A549 (cell line): ENCODE measurements at regions of chr15 and their contacts with region 1.

Region 1: GRCh38 chr15:63093486-63094205 is 28.0 kb upstream of the LACTB start:
- DNase-seq: peak; percentile 81 to 91
- ATAC-seq: peak; percentile 70 to 76
- H3K4me3 ChIP-seq: no peak overlapping the region
- H3K27ac ChIP-seq: peak overlapping the region; percentile 91 to 93
- H3K4me1 ChIP-seq: peaks cover 78% of the 10 kb centered on the region
- CTCF ChIP-seq: peak; percentile 98
- EP300 ChIP-seq: no peak
- POLR2A ChIP-seq: no peak
- RAD21 ChIP-seq: peak; percentile 100

Region 2: DNA sequence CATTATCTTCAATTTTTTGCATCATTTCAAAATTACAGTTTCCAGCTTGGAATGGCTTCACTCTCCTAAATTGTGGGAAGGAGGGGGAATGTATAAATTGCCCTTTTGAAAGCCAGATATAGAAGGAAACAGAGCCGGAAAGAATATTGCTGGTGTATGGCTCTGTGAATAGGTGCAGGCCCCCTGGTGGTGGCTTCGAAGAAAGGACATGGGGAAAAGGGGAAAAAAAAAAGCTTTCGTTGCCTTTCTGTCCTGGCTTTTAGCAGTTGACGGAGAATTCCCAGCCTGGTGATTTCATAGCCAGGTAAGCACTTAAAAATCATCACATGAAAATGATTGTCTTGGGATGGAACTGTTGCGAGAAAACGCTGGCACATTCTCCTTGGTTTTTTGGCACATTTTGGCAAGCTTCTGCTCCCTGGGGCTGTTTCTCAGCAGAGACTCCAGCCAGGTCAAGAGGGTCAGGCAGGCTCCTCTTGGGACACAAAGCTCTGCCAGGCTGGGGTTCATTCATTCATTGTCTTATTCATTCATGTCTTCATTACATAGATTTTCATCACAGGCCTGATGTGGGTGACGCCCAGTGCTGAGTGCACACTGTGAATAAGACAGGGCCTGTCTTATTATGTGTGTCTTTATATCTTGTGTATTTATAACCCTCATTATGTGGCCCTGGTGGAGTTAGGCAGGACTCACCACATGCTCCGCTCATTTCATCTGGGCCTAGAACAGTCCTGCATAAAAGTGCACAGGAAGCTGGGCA is 351.1 kb before region 1 on chr15:
- CTCF ChIA-PET with region 1: interaction called, 12 read pairs
- POLR2A ChIA-PET with region 1: no interaction called
- DNase-seq: peak; percentile 70 to 84
- ATAC-seq: peak; percentile 75 to 87
- H3K4me3 ChIP-seq: peak overlapping the region; percentile 40
- H3K27ac ChIP-seq: peak overlapping the region; percentile 75 to 78
- H3K4me1 ChIP-seq: peaks cover 44% of the 10 kb centered on the region
- CTCF ChIP-seq: peak; percentile 96
- EP300 ChIP-seq: peak in 1 of 2 experiments; percentile 23; a peak in 1 of 5 replicates
- POLR2A ChIP-seq: no peak
- RAD21 ChIP-seq: peak; percentile 66 to 70

Region 3: GRCh38 chr15:62964251-62964650 is 129.4 kb before region 1 on chr15:
- CTCF ChIA-PET with region 1: no interaction called
- POLR2A ChIA-PET with region 1: no interaction called
- DNase-seq: no peak
- ATAC-seq: no peak
- H3K4me3 ChIP-seq: no peak overlapping the region
- H3K27ac ChIP-seq: no peak overlapping the region
- H3K4me1 ChIP-seq: peaks cover under 1% of the 10 kb centered on the region; the same call in 1 of the 3 replicates
- CTCF ChIP-seq: no peak
- EP300 ChIP-seq: no peak
- POLR2A ChIP-seq: no peak
- RAD21 ChIP-seq: no peak

Region 4: GRCh38 chr15:63019539-63020109 is 74.0 kb before region 1 on chr15:
- CTCF ChIA-PET with region 1: interaction called, 6 read pairs
- POLR2A ChIA-PET with region 1: interaction called, 12 read pairs
- DNase-seq: peak; percentile 76 to 85
- ATAC-seq: peak; percentile 78 to 82
- H3K4me3 ChIP-seq: no peak overlapping the region
- H3K27ac ChIP-seq: peak overlapping the region; percentile 59 to 85
- H3K4me1 ChIP-seq: peaks cover 66% of the 10 kb centered on the region
- CTCF ChIP-seq: no peak
- EP300 ChIP-seq: peak in 1 of 2 experiments; percentile 23; a peak in 1 of 5 replicates
- POLR2A ChIP-seq: no peak
- RAD21 ChIP-seq: peak in 1 of 2 experiments; percentile 30; a peak in 1 of 5 replicates

Region 5: GRCh38 chr15:63107895-63108546 is 14.4 kb after region 1 on chr15:
- CTCF ChIA-PET with region 1: interaction called, 38 read pairs
- POLR2A ChIA-PET with region 1: interaction called, 8 read pairs
- DNase-seq: peak; percentile 93 to 99
- ATAC-seq: peak; percentile 96
- H3K4me3 ChIP-seq: no peak overlapping the region
- H3K27ac ChIP-seq: peak overlapping the region; percentile 84 to 92
- H3K4me1 ChIP-seq: peaks cover 33% of the 10 kb centered on the region
- CTCF ChIP-seq: no peak
- EP300 ChIP-seq: peak; percentile 98 to 99
- POLR2A ChIP-seq: no peak
- RAD21 ChIP-seq: peak; percentile 43 to 77

Region 6: GRCh38 chr15:63135804-63136203 is 42.2 kb after region 1 on chr15:
- CTCF ChIA-PET with region 1: interaction called, 20 read pairs
- POLR2A ChIA-PET with region 1: no interaction called
- DNase-seq: peak in 1 of 2 experiments; percentile 36
- ATAC-seq: peak; percentile 65 to 77; a peak in 5 of 6 replicates
- H3K4me3 ChIP-seq: no peak overlapping the region
- H3K27ac ChIP-seq: peak overlapping the region; percentile 37 to 71; a peak in 5 of 6 replicates
- H3K4me1 ChIP-seq: peaks cover 40% of the 10 kb centered on the region
- CTCF ChIP-seq: no peak
- EP300 ChIP-seq: no peak
- POLR2A ChIP-seq: no peak
- RAD21 ChIP-seq: no peak

Region 7: DNA sequence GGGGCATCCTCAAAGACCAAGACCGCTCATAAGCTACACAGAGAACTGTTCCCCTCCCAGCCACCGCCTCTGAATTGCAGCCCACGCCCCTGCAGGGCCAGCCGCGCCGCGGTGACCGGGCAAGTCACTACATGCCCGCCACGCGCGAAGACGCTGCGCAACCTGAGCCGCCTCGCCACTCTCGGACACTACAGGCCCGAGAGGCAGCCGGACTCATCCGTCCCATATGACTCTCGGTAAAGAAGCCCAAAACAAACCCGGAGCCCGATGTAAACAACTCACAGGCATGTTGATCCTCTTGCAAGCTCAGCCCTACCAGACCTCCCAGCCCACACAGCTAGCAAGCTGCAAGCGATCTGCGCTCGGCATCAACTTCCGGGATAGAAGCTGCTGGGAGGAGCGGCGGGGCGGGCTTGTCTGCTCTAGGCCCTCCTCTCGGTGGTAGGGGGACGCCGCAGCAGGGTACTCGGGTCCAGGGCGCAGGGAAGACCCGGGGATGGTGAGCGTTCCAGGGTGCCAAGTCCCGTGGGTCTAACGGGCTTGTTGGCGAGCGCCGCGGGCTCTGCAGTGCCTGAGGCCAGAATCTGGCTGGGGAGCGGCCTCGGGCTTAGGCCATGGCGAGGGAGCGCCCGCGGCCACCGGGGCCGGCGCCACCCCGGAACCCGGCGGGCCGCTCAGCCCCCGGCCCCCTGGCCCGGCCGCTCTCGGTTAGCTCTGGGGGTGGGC is 63.6 kb after region 1 on chr15 and contains the start of gene RPS27L:
- CTCF ChIA-PET with region 1: interaction called, 12 read pairs
- POLR2A ChIA-PET with region 1: interaction called, 5 read pairs
- DNase-seq: peak; percentile 96 to 98
- ATAC-seq: peak; percentile 98
- H3K4me3 ChIP-seq: peak within 1 kb of the TSS; percentile 74
- H3K27ac ChIP-seq: peak within 1 kb of the TSS; percentile 95 to 98
- H3K4me1 ChIP-seq: peaks cover 32% of the 10 kb centered on the region
- CTCF ChIP-seq: no peak
- EP300 ChIP-seq: no peak
- POLR2A ChIP-seq: peak; percentile 93
- RAD21 ChIP-seq: no peak; a peak in 2 of 5 replicates
- polyA plus RNA-seq, gene RPS27L: 742 and 748 TPM in 2 replicates

Region 8: DNA sequence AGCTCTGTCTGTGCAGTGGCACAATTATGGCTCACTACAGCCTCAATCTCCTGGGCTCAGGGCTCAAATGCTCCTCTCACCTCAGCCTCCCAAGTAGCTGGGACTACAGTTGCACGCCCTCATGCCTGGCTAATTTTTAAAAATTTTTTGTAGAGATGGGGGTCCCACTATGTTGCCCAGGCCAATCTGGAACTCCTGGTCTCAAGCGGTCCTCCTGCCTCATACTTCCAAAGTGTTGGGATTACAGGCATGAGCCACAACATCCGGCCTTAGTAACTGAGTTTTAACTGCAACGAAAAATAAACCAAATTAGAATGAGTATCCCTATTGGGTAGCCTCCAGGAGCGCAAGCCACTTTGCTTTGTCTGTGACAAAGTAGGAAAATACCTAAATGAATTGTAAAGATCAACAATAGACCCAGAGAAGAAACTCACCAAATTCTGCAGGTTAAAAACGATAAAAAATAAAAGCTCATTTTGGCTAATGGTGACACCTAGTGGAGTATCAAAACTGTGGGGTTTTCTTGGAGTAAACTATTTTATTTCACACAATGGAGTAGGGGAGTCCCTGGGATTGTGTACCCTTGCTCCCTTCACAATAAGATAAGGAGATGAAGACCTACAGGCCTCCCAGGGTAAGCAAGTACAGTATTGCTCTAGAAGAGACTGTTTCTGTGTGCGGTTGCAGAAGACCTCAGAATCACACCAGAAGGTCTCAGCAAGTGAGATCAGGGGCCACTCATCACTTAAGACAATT is 309.0 kb after region 1 on chr15:
- CTCF ChIA-PET with region 1: no interaction called
- POLR2A ChIA-PET with region 1: no interaction called
- DNase-seq: peak; percentile 55 to 57
- ATAC-seq: peak; percentile 79 to 88
- H3K4me3 ChIP-seq: no peak overlapping the region
- H3K27ac ChIP-seq: peak overlapping the region; percentile 36 to 70; a peak in 5 of 6 replicates
- H3K4me1 ChIP-seq: peaks cover 19% of the 10 kb centered on the region; the same call in 2 of the 3 replicates
- CTCF ChIP-seq: peak; percentile 94
- EP300 ChIP-seq: no peak
- POLR2A ChIP-seq: no peak
- RAD21 ChIP-seq: peak; percentile 94 to 97

Region 9: GRCh38 chr15:63466378-63467192 is 372.9 kb after region 1 on chr15:
- CTCF ChIA-PET with region 1: no interaction called
- POLR2A ChIA-PET with region 1: no interaction called
- DNase-seq: peak; percentile 88 to 91
- ATAC-seq: peak; percentile 82 to 89
- H3K4me3 ChIP-seq: no peak overlapping the region
- H3K27ac ChIP-seq: peak overlapping the region; percentile 46 to 70
- H3K4me1 ChIP-seq: peaks cover 47% of the 10 kb centered on the region
- CTCF ChIP-seq: peak; percentile 95
- EP300 ChIP-seq: no peak
- POLR2A ChIP-seq: no peak
- RAD21 ChIP-seq: peak; percentile 96 to 97

Region 10: GRCh38 chr15:64961013-64961412 is 1867.4 kb after region 1 on chr15:
- CTCF ChIA-PET with region 1: no interaction called
- POLR2A ChIA-PET with region 1: no interaction called
- DNase-seq: no peak
- ATAC-seq: no peak
- H3K4me3 ChIP-seq: no peak overlapping the region
- H3K27ac ChIP-seq: no peak overlapping the region
- H3K4me1 ChIP-seq: no peaks in the 10 kb centered on the region
- CTCF ChIP-seq: no peak
- EP300 ChIP-seq: no peak
- POLR2A ChIP-seq: no peak
- RAD21 ChIP-seq: no peak